SK-N-SH (cell line): ENCODE measurements at regions of chr22 and their contacts with region 1.

Region 1: DNA sequence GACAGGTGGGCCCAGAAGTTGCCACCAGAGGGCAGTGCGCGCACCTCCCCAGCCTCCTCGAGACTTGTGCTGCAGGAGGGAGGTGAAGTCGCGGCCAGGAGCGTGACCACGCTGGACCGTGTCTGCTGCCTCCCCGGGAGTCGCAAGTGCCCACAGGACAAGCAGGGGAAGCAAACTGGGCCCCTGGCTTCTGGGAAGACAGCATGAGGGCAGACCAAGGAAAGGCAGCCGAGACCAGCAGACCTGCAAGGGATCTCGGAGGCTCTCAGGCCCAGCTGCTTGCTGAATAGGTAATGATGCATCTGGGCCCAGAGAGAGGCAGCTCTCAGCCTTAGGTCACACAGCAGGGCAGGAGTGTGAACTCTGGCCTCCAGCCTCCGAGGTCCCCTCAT is 17.0 kb upstream of the IL2RB start:
- DNase-seq: peak; percentile 93
- H3K4me3 ChIP-seq: no peak overlapping the region
- H3K27ac ChIP-seq: no peak overlapping the region
- H3K4me1 ChIP-seq: peaks cover 0 to 17% of the 10 kb centered on the region in 2 experiments; a peak in 1 of 4 replicates
- H3K27me3 ChIP-seq: no peaks in the 10 kb centered on the region
- CTCF ChIP-seq: peak; percentile 88
- EP300 ChIP-seq: no peak
- RAD21 ChIP-seq: peak; percentile 84

Region 2: DNA sequence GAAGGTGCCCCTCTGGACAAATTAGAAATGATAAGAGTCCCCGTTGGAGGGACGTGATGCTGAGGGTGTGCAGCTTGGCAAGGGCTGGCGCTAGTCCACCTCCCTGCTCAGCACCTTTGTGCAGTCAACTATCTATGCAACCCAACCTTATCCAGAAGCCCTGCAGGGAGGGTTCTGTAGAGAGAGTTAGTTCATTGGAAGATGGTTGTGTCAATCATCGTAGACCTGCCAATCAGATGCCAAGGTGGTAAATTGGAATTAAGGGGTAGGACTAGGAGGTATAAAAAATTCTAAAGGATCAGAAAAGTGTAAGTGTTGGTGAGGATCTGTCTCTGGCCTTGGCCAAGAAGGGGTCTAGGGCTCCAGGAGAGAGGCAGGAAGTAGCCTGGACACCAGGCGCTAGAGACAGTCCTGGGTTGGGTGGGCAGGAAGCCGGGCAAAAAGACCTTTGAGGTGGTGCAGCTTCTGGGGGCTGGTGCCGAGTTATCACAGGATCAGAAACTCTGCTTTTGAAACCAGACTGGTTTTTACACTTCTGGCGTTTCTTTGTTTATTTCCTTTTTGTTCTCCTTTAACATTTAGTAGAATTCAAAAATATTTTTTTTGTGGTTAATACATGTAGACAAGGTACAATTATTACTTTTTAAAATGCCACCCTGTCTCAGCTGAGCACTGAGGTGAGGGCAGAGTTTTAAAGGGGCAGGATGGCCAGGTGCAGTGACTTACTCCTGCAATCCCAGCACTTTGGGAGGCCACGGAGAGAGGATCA is 19.7 kb after region 1 on chr22:
- CTCF ChIA-PET with region 1: interaction called, 10 read pairs
- POLR2A ChIA-PET with region 1: no interaction called
- DNase-seq: peak; percentile 85
- H3K4me3 ChIP-seq: peak overlapping the region; percentile 55 to 74
- H3K27ac ChIP-seq: peak overlapping the region; percentile 90 to 91
- H3K4me1 ChIP-seq: peaks cover 33 to 38% of the 10 kb centered on the region in 2 experiments
- H3K27me3 ChIP-seq: no peaks in the 10 kb centered on the region
- CTCF ChIP-seq: no peak
- EP300 ChIP-seq: no peak
- RAD21 ChIP-seq: no peak